Activated CD8-positive, alpha-beta T cell treated with anti-CD3 and anti-CD28 coated beads for 36 hours (primary cell): ENCODE measurements at regions of chr17 and their contacts with region 1.

Region 1: DNA sequence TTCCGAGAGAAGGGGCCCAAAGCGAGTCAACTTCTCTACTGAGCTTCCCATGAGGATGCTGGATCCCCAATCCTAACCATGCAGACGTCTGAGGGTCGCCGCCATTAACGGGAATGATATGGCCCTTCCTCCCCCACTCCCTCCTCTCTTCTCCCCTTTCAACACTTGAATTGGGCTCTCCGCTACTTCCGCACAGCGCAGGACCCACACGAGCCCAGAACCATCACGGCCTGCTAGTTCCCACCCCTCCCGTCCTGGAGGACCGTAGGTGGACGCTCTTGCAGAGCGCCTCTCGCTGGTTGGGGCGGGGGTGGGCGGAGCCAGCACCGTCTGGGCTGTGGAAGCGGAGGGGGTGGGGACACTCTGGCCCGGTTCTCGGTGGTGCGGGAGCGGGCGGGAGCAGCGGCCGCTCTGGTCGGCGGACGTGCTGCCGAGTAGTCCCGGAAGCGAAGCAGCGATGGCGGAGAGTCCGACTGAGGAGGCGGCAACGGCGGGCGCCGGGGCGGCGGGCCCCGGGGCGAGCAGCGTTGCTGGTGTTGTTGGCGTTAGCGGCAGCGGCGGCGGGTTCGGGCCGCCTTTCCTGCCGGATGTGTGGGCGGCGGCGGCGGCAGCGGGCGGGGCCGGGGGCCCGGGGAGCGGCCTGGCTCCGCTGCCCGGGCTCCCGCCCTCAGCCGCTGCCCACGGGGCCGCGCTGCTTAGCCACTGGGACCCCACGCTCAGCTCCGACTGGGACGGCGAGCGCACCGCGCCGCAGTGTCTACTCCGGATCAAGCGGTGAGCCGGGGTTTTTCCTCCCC is at the start of gene UBE2Z:
- DNase-seq: peak; percentile 92
- ATAC-seq: peak; percentile 85
- H3K4me3 Mint-ChIP-seq: peak within 1 kb of the TSS; percentile 92
- H3K27ac Mint-ChIP-seq: peak within 1 kb of the TSS; percentile 97
- H3K4me1 Mint-ChIP-seq: peaks cover 41% of the 10 kb centered on the region
- H3K27me3 Mint-ChIP-seq: no peaks in the 10 kb centered on the region
- CTCF ChIP-seq: no peak
- total RNA-seq, gene UBE2Z: 71.1 to 74.3 TPM

Region 2: GRCh38 chr17:48892940-48893645 is 15.2 kb before region 1 on chr17:
- CTCF ChIA-PET with region 1: interaction called, 4 read pairs
- POLR2A ChIA-PET with region 1: interaction called, 62 read pairs
- intact Hi-C with region 1: no loop called
- DNase-seq: peak; percentile 38
- ATAC-seq: no peak
- H3K4me3 Mint-ChIP-seq: peak overlapping the region; percentile 94
- H3K27ac Mint-ChIP-seq: peak overlapping the region; percentile 98
- H3K4me1 Mint-ChIP-seq: peaks cover 26% of the 10 kb centered on the region
- H3K27me3 Mint-ChIP-seq: no peaks in the 10 kb centered on the region
- CTCF ChIP-seq: no peak

Region 3: GRCh38 chr17:48954300-48954755 is 46.1 kb after region 1 on chr17:
- CTCF ChIA-PET with region 1: no interaction called
- POLR2A ChIA-PET with region 1: no interaction called
- intact Hi-C with region 1: no loop called
- DNase-seq: peak; percentile 38
- ATAC-seq: peak; percentile 62
- H3K4me3 Mint-ChIP-seq: no peak overlapping the region
- H3K27ac Mint-ChIP-seq: no peak overlapping the region
- H3K4me1 Mint-ChIP-seq: peaks cover 3% of the 10 kb centered on the region
- H3K27me3 Mint-ChIP-seq: peaks cover 14% of the 10 kb centered on the region
- CTCF ChIP-seq: no peak